ENCODE measurements at regions of chr9 and their contacts with region 1.

Region 1: GRCh38 chr9:6566409-6567139 is 79.0 kb downstream of the GLDC start:
- DNase-seq: peak; percentile 98
- H3K4me3 ChIP-seq: peak overlapping the region in 1 of 3 experiments; percentile 12
- H3K27ac ChIP-seq: peak overlapping the region; percentile 99
- H3K4me1 ChIP-seq: peaks cover 58% of the 10 kb centered on the region
- H3K27me3 ChIP-seq: no peaks in the 10 kb centered on the region
- CTCF ChIP-seq: peak in 1 of 2 donors; percentile 12
- POLR2A ChIP-seq: peak; percentile 82

Region 2: GRCh38 chr9:6197330-6197729 is 369.2 kb before region 1 on chr9:
- CTCF ChIA-PET with region 1: interaction called, 4 read pairs
- POLR2A ChIA-PET with region 1: no interaction called
- dilution Hi-C with region 1: no loop called
- intact Hi-C with region 1: loop called (anchors 1 kb)
- DNase-seq: peak; percentile 67
- H3K4me3 ChIP-seq: no peak overlapping the region
- H3K27ac ChIP-seq: no peak overlapping the region
- H3K4me1 ChIP-seq: peaks cover 18% of the 10 kb centered on the region
- H3K27me3 ChIP-seq: no peaks in the 10 kb centered on the region
- CTCF ChIP-seq: peak; percentile 29 to 42
- POLR2A ChIP-seq: no peak

Region 3: GRCh38 chr9:6305954-6306563 is 260.5 kb before region 1 on chr9:
- CTCF ChIA-PET with region 1: interaction called, 18 read pairs
- POLR2A ChIA-PET with region 1: no interaction called
- dilution Hi-C with region 1: no loop called
- intact Hi-C with region 1: no loop called
- DNase-seq: peak; percentile 72
- H3K4me3 ChIP-seq: no peak overlapping the region
- H3K27ac ChIP-seq: no peak overlapping the region
- H3K4me1 ChIP-seq: no peaks in the 10 kb centered on the region
- H3K27me3 ChIP-seq: peaks cover 4 to 5% of the 10 kb centered on the region in 2 experiments
- CTCF ChIP-seq: peak; percentile 22 to 34
- POLR2A ChIP-seq: no peak

Region 4: GRCh38 chr9:6353851-6354686 is 212.5 kb before region 1 on chr9:
- CTCF ChIA-PET with region 1: interaction called, 124 read pairs
- POLR2A ChIA-PET with region 1: interaction called, 4 read pairs
- dilution Hi-C with region 1: no loop called
- intact Hi-C with region 1: loop called (anchors 1 kb)
- DNase-seq: peak; percentile 72
- H3K4me3 ChIP-seq: no peak overlapping the region
- H3K27ac ChIP-seq: no peak overlapping the region
- H3K4me1 ChIP-seq: peaks cover 4% of the 10 kb centered on the region
- H3K27me3 ChIP-seq: no peaks in the 10 kb centered on the region
- CTCF ChIP-seq: peak; percentile 67 to 69
- POLR2A ChIP-seq: no peak

Region 5: DNA sequence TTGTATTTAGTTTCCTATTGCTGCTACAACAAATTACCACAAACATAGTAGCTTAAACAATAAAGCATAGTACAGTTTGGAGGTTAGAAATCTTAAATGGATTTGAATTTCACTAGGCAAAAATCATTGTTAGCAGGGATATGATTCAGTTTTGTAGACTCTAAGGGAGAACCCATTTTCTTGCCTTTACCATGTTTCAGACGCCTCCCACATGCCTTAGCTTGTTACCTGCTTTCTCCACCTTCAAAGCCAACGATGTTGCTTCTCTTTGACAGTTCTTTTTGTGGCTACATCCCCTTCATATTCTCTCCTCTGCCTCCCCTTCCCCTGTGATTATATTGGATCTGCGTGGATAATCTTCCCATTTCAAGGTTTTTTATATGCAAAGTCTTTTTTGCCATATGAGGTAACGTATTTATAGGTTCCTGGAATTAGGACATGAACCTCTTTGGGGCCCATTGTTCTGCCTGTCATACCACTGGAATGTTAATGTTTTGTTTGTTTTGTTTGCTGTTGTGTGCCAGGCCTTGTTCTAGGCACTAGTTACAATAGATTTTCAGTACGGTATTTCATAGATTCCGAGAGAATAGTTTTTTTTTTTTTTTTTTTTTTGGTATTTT is 99.5 kb before region 1 on chr9:
- CTCF ChIA-PET with region 1: interaction called, 4 read pairs
- POLR2A ChIA-PET with region 1: no interaction called
- dilution Hi-C with region 1: no loop called
- intact Hi-C with region 1: loop called (anchors 1 kb)
- DNase-seq: peak; percentile 20
- H3K4me3 ChIP-seq: no peak overlapping the region
- H3K27ac ChIP-seq: peak overlapping the region; percentile 64
- H3K4me1 ChIP-seq: peaks cover 8% of the 10 kb centered on the region
- H3K27me3 ChIP-seq: no peaks in the 10 kb centered on the region
- CTCF ChIP-seq: no peak
- POLR2A ChIP-seq: no peak

Region 6: DNA sequence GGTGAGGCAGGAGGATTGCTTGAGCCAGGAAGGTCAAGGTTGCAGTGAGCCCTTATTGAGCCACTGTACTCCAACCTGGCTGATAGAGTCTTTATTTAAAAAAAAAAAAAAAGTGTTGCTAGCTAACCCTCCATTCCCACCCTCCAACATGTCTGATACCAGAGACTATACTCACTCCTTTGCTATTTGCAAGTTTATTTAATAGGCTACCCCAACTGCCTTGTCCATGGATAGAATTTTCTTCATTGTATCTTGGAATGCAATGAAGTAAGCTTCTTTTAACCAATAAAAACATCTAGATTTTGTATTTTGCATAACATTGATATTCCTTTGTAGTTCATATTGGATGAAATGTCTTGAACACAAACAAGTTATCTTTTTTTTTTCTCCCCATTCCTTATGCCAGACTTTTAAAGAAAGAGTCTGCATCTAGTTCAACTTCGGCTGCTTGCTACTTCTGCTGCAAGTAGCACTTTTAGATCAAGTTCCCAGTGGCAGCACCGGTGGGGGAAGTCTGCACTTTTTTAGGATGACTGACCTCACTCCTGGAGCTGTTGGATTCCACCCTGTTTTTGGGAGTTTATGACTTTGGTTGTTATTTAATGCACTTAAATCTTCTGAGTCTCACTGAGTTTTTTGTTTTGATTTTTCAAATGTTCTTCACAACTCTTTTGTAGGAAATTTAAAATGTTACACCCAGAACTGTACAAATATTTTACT is 41.1 kb before region 1 on chr9:
- CTCF ChIA-PET with region 1: interaction called, 17 read pairs
- POLR2A ChIA-PET with region 1: no interaction called
- dilution Hi-C with region 1: no loop called
- intact Hi-C with region 1: loop called (anchors 2 kb)
- DNase-seq: no peak
- H3K4me3 ChIP-seq: no peak overlapping the region
- H3K27ac ChIP-seq: no peak overlapping the region
- H3K4me1 ChIP-seq: no peaks in the 10 kb centered on the region
- H3K27me3 ChIP-seq: no peaks in the 10 kb centered on the region
- CTCF ChIP-seq: no peak
- POLR2A ChIP-seq: no peak

Region 7: GRCh38 chr9:6605202-6605601 is 38.6 kb after region 1 on chr9:
- CTCF ChIA-PET with region 1: no interaction called
- POLR2A ChIA-PET with region 1: no interaction called
- dilution Hi-C with region 1: no loop called
- intact Hi-C with region 1: no loop called
- DNase-seq: no peak
- H3K4me3 ChIP-seq: no peak overlapping the region
- H3K27ac ChIP-seq: no peak overlapping the region
- H3K4me1 ChIP-seq: no peaks in the 10 kb centered on the region
- H3K27me3 ChIP-seq: no peaks in the 10 kb centered on the region
- CTCF ChIP-seq: no peak
- POLR2A ChIP-seq: no peak

Region 8: DNA sequence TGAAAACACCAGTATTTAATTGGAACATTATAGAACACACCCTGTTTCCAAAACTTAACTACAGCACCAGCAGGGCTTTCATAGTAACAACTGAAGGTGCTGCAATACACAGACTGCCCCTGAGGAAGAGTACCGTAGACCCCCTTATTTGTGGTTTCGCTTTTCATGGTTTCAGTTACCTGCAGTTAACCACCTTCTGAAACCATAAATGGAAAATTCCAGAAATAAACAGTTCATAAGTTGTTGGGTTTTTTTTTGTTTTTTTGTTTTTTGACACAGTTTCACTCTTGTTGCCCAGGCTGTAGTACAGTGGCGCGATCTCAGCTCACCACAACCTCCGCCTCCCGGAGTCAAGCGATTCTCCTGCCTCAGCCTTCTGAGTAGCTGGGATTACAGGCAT is 88.5 kb after region 1 on chr9:
- CTCF ChIA-PET with region 1: no interaction called
- POLR2A ChIA-PET with region 1: no interaction called
- dilution Hi-C with region 1: no loop called
- intact Hi-C with region 1: no loop called
- DNase-seq: no peak
- H3K4me3 ChIP-seq: no peak overlapping the region
- H3K27ac ChIP-seq: no peak overlapping the region
- H3K4me1 ChIP-seq: no peaks in the 10 kb centered on the region
- H3K27me3 ChIP-seq: peaks cover 0 to 2% of the 10 kb centered on the region in 2 experiments
- CTCF ChIP-seq: no peak
- POLR2A ChIP-seq: no peak